Naive thymus-derived CD4-positive, alpha-beta T cell (primary cell): ENCODE measurements at regions of chr1 and their contacts with region 1.

Region 1: DNA sequence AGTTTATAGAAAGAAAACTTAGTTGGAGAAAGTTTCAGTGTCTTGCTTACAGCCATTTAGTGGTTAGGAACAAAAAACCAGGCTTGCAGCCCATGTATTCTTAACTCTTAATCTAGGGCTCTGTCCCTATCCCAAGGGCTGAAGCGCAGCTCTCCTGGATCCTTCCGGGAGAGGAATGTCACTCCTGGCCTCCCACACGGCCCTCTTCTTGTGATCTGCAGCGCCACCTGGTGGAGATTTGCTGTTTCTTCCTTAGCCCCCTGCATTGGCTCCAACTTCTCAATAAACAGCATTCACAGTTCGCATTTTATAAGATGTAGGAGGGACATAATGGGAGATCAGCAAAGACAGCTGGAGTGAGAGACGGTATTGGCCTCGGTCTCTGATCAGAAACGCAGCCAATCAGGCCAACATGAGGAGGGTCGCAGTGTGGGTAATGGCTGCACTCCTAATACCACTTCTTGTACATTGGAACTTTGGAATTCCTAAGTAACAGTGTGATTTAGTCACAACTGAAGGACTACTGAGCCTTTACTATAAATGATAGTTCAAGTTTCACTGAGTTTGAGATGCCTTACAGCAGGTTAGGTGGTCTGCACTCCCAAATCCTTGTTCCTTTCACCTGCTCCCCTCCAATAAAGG is 283.4 kb downstream of the ASTN1 start:
- DNase-seq: peak in 1 of 9 donors; percentile 41
- ATAC-seq: no peak
- H3K4me3 ChIP-seq: no peak overlapping the region
- H3K4me3 Mint-ChIP-seq: no peak overlapping the region
- H3K27ac ChIP-seq: no peak overlapping the region
- H3K27ac Mint-ChIP-seq: no peak overlapping the region
- H3K4me1 ChIP-seq: no peaks in the 10 kb centered on the region
- H3K4me1 Mint-ChIP-seq: no peaks in the 10 kb centered on the region
- H3K27me3 ChIP-seq: no peaks in the 10 kb centered on the region
- H3K27me3 Mint-ChIP-seq: peaks cover 0 to 14% (median 5%) of the 10 kb centered on the region in 5 donors

Region 2: GRCh38 chr1:176374967-176375569 is 506.0 kb before region 1 on chr1:
- CTCF ChIA-PET with region 1: no interaction called
- POLR2A ChIA-PET with region 1: no interaction called
- intact Hi-C with region 1: loop called in 1 of 2 experiments (anchors 1 kb)
- DNase-seq: peak in 8 of 9 donors; percentile 10 to 59 (median 27)
- ATAC-seq: peak; percentile 67
- H3K4me3 ChIP-seq: no peak overlapping the region
- H3K4me3 Mint-ChIP-seq: no peak overlapping the region
- H3K27ac ChIP-seq: no peak overlapping the region
- H3K27ac Mint-ChIP-seq: no peak overlapping the region
- H3K4me1 ChIP-seq: no peaks in the 10 kb centered on the region
- H3K4me1 Mint-ChIP-seq: no peaks in the 10 kb centered on the region
- H3K27me3 ChIP-seq: no peaks in the 10 kb centered on the region
- H3K27me3 Mint-ChIP-seq: peaks cover 1 to 13% (median 6%) of the 10 kb centered on the region in 5 donors

Region 3: DNA sequence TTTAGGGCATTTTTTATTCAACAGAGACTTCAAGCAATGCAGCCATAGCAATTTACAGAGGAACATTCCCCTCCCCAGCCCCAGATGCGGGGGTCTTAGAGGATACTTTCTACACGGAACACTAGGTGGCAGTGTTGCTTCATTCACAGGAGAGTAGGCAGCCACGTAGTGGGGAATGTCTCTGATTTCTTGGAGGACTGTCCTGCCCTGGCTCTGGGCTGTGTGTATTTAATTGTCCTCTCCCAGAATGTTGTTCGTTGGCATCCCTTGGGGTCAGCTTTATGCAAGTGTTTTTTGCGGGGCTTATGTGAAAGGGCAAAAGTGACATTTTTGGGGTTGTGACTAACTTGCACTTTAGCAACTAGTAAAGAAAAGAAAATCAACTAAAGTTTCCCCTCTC is 321.2 kb before region 1 on chr1:
- CTCF ChIA-PET with region 1: no interaction called
- POLR2A ChIA-PET with region 1: no interaction called
- intact Hi-C with region 1: loop called in 1 of 2 experiments (anchors 1 kb)
- DNase-seq: peak in 1 of 9 donors; percentile 21
- ATAC-seq: no peak
- H3K4me3 ChIP-seq: no peak overlapping the region
- H3K4me3 Mint-ChIP-seq: no peak overlapping the region
- H3K27ac ChIP-seq: no peak overlapping the region
- H3K27ac Mint-ChIP-seq: no peak overlapping the region
- H3K4me1 ChIP-seq: no peaks in the 10 kb centered on the region
- H3K4me1 Mint-ChIP-seq: no peaks in the 10 kb centered on the region
- H3K27me3 ChIP-seq: no peaks in the 10 kb centered on the region
- H3K27me3 Mint-ChIP-seq: peaks cover 0 to 22% (median 13%) of the 10 kb centered on the region in 5 donors